ENCODE measurements at regions of chr20 and their contacts with region 1.

Region 1: DNA sequence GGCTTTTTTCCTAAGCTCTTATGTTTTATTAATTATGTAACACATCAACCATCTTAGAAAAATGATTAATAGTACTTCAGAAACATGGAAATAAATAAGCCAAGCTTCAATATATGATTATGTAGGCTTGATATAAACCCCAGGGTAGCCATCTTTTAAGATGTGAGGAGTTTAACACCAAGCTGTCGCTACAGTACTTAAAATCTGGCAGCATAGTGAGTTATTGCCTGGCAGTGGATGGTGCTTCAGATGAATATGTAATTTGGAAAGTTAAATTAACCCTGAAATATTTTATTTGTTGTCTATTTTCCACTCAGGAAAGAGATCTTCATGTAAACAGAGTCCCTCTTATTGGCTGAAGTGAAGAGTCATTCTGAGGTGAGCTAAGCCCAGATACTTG is 339.0 kb upstream of the ZFP64 start:
- DNase-seq: no peak
- ATAC-seq: no peak
- H3K4me3 ChIP-seq: no peak overlapping the region
- H3K4me3 Mint-ChIP-seq: no peak overlapping the region
- H3K27ac ChIP-seq: no peak overlapping the region
- H3K27ac Mint-ChIP-seq: no peak overlapping the region
- H3K4me1 ChIP-seq: no peaks in the 10 kb centered on the region
- H3K4me1 Mint-ChIP-seq: no peaks in the 10 kb centered on the region
- H3K27me3 ChIP-seq: no peaks in the 10 kb centered on the region
- H3K27me3 Mint-ChIP-seq: no peaks in the 10 kb centered on the region

Region 2: DNA sequence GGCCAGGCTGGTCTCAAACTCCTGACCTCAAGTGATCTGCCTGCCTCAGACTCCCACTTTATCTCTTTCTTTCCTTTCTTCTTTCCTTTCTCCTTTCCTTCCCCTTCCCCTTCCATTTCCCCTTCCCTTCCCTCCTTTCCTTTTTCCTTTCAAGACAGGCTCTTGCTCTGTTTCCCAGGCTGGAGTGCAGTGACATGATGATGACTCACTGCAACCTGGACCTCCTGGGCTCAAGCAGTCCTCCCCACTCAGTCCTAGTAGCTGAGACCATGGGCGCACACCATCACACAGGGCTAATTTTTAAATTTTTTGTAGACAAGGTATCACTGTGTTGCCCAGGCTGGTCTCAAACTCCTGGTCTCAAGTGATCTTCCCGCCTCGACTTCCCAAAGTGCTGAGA is 38.6 kb after region 1 on chr20:
- CTCF ChIA-PET with region 1: no interaction called
- POLR2A ChIA-PET with region 1: interaction called in 1 of 2 experiments, 16 read pairs
- DNase-seq: no peak
- ATAC-seq: no peak
- H3K4me3 ChIP-seq: no peak overlapping the region
- H3K4me3 Mint-ChIP-seq: no peak overlapping the region
- H3K27ac ChIP-seq: no peak overlapping the region
- H3K27ac Mint-ChIP-seq: no peak overlapping the region
- H3K4me1 ChIP-seq: no peaks in the 10 kb centered on the region
- H3K4me1 Mint-ChIP-seq: peaks cover 0 to 9% (median 2%) of the 10 kb centered on the region in 3 donors
- H3K27me3 ChIP-seq: peaks cover 0 to 2% of the 10 kb centered on the region in 2 experiments
- H3K27me3 Mint-ChIP-seq: peaks cover 0 to 5% of the 10 kb centered on the region in 2 donors

Measured in T-cell (primary cell).